Sigmoid colon (tissue), 7 donors: ENCODE measurements at regions of chr15 and their contacts with region 1.

Region 1: DNA sequence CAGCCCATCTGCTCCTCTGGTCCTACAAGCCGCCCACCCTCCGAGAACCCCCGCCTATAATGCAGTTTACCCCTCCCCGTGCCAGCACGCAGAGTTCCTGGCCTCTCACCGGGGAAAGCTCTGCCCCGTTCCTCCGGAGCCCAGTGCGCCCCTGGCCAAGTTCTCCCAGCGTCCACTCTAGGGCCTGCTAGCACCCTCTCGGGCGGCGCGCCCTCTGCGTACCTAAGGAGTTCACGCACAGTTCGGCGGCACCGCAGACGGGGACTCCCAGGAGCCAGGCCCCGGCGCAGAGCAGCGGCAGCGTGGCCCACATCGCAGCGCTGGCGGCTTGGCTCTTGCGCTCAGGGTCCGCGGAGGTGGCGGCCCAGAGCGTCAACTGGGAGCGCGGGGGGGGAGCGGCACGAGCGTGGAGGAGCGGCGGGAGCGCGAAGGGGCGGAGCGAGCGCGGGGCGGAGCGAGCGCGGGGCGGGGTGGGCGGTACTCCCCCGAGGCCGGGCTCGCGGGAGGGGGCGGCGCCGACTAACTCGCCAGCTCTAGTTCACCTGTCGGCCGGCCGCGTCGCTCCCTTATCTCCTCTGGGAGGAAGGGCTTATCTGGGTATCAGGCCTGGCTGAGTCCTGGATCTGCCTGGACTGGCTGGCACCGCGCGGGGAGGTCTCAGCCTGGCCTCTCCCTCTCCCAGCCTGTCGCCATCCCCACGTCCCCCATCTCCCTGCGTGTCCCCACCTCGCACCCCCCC is at the start of gene CTSH:
- DNase-seq: peak; percentile 87
- H3K4me3 ChIP-seq: peak within 1 kb of the TSS; percentile 43 to 58 (median 51)
- H3K27ac ChIP-seq: peak within 1 kb of the TSS; percentile 51 to 67 (median 64)
- H3K4me1 ChIP-seq: peaks cover 0 to 14% (median 13%) of the 10 kb centered on the region in 4 donors
- H3K27me3 ChIP-seq: no peaks in the 10 kb centered on the region
- CTCF ChIP-seq: no peak
- EP300 ChIP-seq: no peak
- POLR2A ChIP-seq: no peak
- total RNA-seq, gene CTSH: 37.4 to 102 (median 96.3) TPM

Region 2: GRCh38 chr15:78915341-78916087 is 29.3 kb before region 1 on chr15:
- intact Hi-C with region 1: no loop called
- DNase-seq: peak; percentile 82
- H3K4me3 ChIP-seq: no peak overlapping the region
- H3K27ac ChIP-seq: peak overlapping the region; percentile 38 to 87 (median 78)
- H3K4me1 ChIP-seq: peaks cover 0 to 68% (median 55%) of the 10 kb centered on the region in 4 donors
- H3K27me3 ChIP-seq: no peaks in the 10 kb centered on the region
- CTCF ChIP-seq: no peak
- EP300 ChIP-seq: no peak
- POLR2A ChIP-seq: no peak

Region 3: DNA sequence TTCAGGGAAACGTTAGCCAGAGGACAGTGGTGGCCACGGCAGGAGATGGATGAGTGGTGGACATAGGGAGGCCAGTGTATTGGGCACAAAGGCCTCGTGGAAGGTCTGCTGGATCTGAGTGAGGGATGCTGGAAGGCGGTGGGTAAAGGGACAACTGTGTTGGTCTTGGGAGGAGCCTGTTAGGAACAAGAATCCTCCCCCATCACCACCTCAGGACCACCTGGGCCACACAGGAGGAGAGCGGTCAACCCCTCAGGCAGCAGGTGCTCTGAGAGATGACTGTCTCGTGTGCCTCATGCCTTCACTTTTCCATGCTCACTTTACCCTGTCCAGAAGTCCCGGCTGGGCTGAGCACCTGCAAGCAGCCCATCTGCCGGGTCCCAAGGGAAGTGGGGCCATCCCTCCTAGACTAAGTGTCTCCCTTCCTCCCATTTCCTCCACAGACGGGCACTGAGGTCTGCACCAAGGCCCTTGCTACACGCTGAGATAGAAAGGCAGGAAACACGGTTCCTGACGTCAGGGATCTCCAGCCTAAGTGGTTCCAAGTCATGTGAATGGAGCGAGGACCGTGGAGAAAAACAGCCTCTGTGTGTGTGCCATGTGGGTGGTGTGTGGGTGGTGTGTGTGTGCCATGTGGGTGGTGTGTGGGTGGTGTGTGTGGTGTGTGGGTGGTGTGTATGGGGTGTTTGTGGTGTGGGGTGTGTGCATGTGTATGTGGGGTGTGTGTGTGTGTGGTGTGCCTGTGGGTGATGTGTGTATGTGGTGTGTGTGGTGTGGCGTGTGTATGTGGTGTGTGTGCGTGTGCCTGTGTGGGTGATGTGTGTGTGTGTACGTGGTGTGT is 47.8 kb after region 1 on chr15:
- intact Hi-C with region 1: loop called (anchors 5 kb)
- DNase-seq: no peak
- H3K4me3 ChIP-seq: no peak overlapping the region
- H3K27ac ChIP-seq: no peak overlapping the region
- H3K4me1 ChIP-seq: peaks cover 0 to 43% (median 33%) of the 10 kb centered on the region in 4 donors
- H3K27me3 ChIP-seq: no peaks in the 10 kb centered on the region
- CTCF ChIP-seq: no peak
- EP300 ChIP-seq: no peak
- POLR2A ChIP-seq: no peak

Region 4: DNA sequence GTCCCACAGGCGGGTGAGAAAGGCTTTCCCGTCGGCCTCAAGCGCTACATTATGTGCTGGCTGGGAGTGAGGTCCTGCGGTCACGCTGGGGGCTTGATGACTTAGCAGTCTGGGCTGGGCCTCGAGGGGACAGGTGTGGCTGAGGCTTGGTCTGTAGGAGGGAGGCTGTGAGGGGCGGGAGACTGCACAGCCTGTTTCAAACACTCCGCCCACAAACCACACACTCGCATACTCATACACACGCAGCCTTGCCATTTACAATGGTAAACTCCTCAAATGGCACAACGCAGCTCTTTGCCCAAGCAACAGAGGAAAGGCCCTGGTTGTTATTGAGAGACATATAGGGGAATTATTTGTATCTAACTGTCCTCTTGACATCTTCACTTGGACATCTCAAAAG is 178.2 kb after region 1 on chr15:
- intact Hi-C with region 1: no loop called
- DNase-seq: no peak
- H3K4me3 ChIP-seq: no peak overlapping the region
- H3K27ac ChIP-seq: no peak overlapping the region
- H3K4me1 ChIP-seq: no peaks in the 10 kb centered on the region
- H3K27me3 ChIP-seq: no peaks in the 10 kb centered on the region
- CTCF ChIP-seq: no peak
- EP300 ChIP-seq: no peak
- POLR2A ChIP-seq: no peak